ENCODE measurements at regions of chr7 and their contacts with region 1.

Region 1: GRCh38 chr7:156582591-156583123 is 57.9 kb upstream of the RNF32 start:
- DNase-seq: no peak
- H3K4me3 ChIP-seq: no peak overlapping the region
- H3K27ac ChIP-seq: no peak overlapping the region
- H3K4me1 ChIP-seq: no peaks in the 10 kb centered on the region
- H3K27me3 ChIP-seq: no peaks in the 10 kb centered on the region
- CTCF ChIP-seq: no peak
- EP300 ChIP-seq: no peak
- POLR2A ChIP-seq: no peak

Region 2: GRCh38 chr7:156152390-156152789 is 430.3 kb before region 1 on chr7:
- intact Hi-C with region 1: no loop called
- DNase-seq: no peak
- H3K4me3 ChIP-seq: no peak overlapping the region
- H3K27ac ChIP-seq: no peak overlapping the region
- H3K4me1 ChIP-seq: no peaks in the 10 kb centered on the region
- H3K27me3 ChIP-seq: no peaks in the 10 kb centered on the region
- CTCF ChIP-seq: no peak
- EP300 ChIP-seq: no peak
- POLR2A ChIP-seq: no peak

Region 3: DNA sequence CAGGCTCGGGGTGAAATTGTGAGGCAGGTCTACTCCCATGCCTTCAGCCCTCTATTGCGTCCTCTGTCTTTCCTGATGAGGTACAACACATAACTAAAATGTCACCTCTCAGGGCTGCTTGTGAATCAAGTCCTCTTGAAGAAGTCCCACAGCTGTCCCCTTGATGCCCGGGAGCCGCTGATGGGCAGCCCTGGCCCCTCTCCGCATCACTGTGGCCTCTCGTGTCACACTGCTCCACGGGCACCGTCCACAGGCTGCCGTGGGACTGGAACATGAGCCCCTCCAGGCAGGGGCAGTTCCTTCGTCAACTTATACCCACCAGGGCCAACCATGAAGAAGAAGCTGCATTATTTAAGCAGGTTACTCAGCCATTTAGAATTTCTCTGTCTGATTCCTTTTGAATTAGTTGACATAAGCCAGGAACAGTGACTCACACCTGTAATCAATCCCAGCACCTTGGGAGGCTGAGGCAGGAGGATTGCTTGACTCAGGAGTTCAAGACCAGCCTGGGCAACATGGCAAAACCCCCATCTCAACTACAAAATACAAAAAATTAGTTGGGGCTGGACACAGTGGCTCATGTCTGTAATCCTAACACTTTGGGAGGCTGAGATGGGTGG is 497.6 kb after region 1 on chr7:
- intact Hi-C with region 1: loop called in 1 of 4 experiments (anchors 10 kb)
- DNase-seq: no peak
- H3K4me3 ChIP-seq: no peak overlapping the region
- H3K27ac ChIP-seq: no peak overlapping the region
- H3K4me1 ChIP-seq: no peaks in the 10 kb centered on the region
- H3K27me3 ChIP-seq: no peaks in the 10 kb centered on the region
- CTCF ChIP-seq: no peak
- EP300 ChIP-seq: no peak
- POLR2A ChIP-seq: no peak

Measured in ovary (tissue), 10 donors.